Activated CD8-positive, alpha-beta T cell treated with anti-CD3 and anti-CD28 coated beads for 36 hours (primary cell): ENCODE measurements at regions of chr12 and their contacts with region 1.

Region 1: DNA sequence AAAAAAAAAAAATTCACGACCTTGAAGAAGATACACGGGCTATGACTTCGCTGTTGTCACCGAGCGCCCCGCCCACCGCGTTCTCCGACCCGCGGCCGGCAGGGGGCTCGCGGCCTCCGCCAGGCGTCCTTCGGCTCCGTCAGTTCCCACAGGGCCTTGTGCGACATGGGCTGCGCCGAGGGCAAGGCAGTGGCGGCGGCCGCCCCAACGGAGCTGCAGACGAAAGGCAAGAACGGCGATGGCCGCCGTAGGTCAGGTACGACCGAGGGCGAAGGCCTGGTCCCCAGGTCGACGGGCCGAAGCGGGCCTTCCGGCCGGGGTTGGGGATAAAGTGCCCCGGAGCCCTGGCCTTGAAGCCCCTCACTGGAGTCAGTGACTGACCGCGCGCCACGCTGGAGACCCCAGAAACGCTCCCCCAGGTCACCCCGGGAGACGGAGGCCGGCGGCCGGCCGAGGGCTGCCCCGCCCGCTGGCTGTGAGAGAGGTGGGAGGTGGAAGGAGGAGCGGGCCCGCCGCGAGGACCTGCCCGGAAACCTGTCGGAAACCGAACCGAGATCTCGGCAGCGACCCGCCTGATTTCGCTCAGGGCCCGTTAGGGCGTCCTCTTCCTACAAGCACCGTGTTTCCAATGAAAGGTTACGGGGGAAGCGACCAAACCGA is at the start of gene TXNRD1:
- DNase-seq: peak; percentile 89
- ATAC-seq: peak; percentile 85
- H3K4me3 Mint-ChIP-seq: peak within 1 kb of the TSS; percentile 66
- H3K27ac Mint-ChIP-seq: peak within 1 kb of the TSS; percentile 78
- H3K4me1 Mint-ChIP-seq: peaks cover 33% of the 10 kb centered on the region
- H3K27me3 Mint-ChIP-seq: no peaks in the 10 kb centered on the region
- CTCF ChIP-seq: peak; percentile 83
- total RNA-seq, gene TXNRD1: 87.9 to 89.0 TPM

Region 2: GRCh38 chr12:103901518-103902173 is 314.1 kb before region 1 on chr12:
- CTCF ChIA-PET with region 1: no interaction called
- POLR2A ChIA-PET with region 1: no interaction called
- intact Hi-C with region 1: no loop called
- DNase-seq: peak; percentile 52
- ATAC-seq: peak; percentile 54
- H3K4me3 Mint-ChIP-seq: peak overlapping the region; percentile 58
- H3K27ac Mint-ChIP-seq: peak overlapping the region; percentile 82
- H3K4me1 Mint-ChIP-seq: peaks cover 65% of the 10 kb centered on the region
- H3K27me3 Mint-ChIP-seq: no peaks in the 10 kb centered on the region
- CTCF ChIP-seq: no peak

Region 3: GRCh38 chr12:104150416-104150815 is 65.4 kb before region 1 on chr12:
- CTCF ChIA-PET with region 1: no interaction called
- POLR2A ChIA-PET with region 1: no interaction called
- intact Hi-C with region 1: no loop called
- DNase-seq: no peak
- ATAC-seq: no peak
- H3K4me3 Mint-ChIP-seq: no peak overlapping the region
- H3K27ac Mint-ChIP-seq: no peak overlapping the region
- H3K4me1 Mint-ChIP-seq: peaks cover 3% of the 10 kb centered on the region
- H3K27me3 Mint-ChIP-seq: peaks cover 3% of the 10 kb centered on the region
- CTCF ChIP-seq: no peak

Region 4: DNA sequence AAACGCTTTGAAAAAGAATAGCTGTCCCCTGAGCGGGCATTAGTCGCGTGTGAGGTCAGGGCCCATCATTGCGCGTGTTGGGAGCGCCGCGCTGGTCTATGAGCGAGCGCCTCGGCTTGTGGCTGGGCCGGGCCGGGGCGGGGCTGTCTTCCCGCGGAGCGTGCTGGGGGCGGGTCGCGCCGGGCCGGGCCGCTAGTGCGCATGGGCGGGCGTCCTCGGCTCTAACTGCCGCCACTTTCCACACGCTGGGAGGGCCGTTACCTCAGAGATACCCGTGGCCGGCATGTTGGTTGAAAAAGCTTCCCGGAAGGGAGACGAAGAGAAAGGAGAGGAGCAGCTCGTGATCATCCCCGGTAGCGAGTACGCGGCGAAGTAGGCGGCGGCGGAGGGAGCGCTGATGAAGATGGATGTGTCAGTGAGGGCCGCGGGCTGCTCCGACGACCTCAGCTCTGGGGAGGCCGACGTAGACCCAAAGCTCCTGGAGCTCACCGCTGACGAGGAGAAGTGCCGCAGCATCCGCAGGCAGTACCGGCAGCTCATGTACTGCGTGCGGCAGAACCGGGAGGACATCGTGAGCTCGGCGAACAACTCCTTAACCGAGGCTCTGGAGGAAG is 87.9 kb after region 1 on chr12 and contains the start of gene EID3:
- CTCF ChIA-PET with region 1: interaction called, 12 read pairs
- POLR2A ChIA-PET with region 1: interaction called, 3 read pairs
- intact Hi-C with region 1: loop called (anchors 5 kb)
- DNase-seq: peak; percentile 91
- ATAC-seq: peak; percentile 99
- H3K4me3 Mint-ChIP-seq: peak within 1 kb of the TSS; percentile 82
- H3K27ac Mint-ChIP-seq: peak within 1 kb of the TSS; percentile 96
- H3K4me1 Mint-ChIP-seq: peaks cover 57% of the 10 kb centered on the region
- H3K27me3 Mint-ChIP-seq: no peaks in the 10 kb centered on the region
- CTCF ChIP-seq: no peak
- total RNA-seq, gene EID3: 3.7 to 4.8 TPM

Region 5: DNA sequence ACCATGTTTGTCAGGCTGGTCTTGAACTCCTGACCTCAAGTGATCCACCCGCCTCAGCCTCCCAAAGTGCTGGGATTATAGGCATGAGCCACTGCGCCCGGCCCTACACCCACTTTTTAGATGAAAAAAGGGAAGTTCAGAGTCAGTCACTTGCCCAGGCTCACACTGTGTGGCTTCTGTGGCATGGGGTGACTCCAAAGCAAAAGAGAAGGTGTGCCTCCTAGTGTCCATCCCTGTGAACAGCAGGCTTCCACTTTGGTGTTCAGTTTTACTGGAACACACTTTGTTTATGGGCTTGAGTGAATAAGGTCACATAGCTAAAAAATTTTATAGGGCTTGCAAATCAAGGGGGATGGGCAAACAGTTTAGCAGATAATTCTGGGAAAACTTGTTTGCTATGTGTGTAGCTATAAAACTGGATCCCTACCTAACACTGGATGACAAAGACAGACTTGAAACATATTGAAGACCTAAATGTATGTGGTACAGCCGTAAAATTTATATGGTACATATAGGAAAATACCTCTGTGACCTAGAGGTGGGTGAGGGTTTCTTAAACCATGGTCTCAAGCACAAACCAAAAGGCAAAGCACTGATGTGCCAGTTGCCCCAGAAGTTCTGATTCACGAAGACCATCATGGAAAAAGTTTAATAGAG is 142.7 kb after region 1 on chr12:
- CTCF ChIA-PET with region 1: interaction called, 4 read pairs
- POLR2A ChIA-PET with region 1: no interaction called
- intact Hi-C with region 1: loop called (anchors 1 kb)
- DNase-seq: peak; percentile 80
- ATAC-seq: peak; percentile 96
- H3K4me3 Mint-ChIP-seq: no peak overlapping the region
- H3K27ac Mint-ChIP-seq: no peak overlapping the region
- H3K4me1 Mint-ChIP-seq: peaks cover 2% of the 10 kb centered on the region
- H3K27me3 Mint-ChIP-seq: no peaks in the 10 kb centered on the region
- CTCF ChIP-seq: peak; percentile 79